Esophagus muscularis mucosa (tissue), 4 donors: ENCODE measurements at regions of chr10 and their contacts with region 1.

Region 1: GRCh38 chr10:14604181-14605142 is 170.2 kb downstream of the FAM107B start:
- DNase-seq: peak; percentile 95
- H3K4me3 ChIP-seq: peak overlapping the region; percentile 63 to 90 (median 64)
- H3K27ac ChIP-seq: peak overlapping the region; percentile 69 to 79 (median 74)
- H3K4me1 ChIP-seq: peaks cover 10 to 31% (median 19%) of the 10 kb centered on the region in 4 donors
- H3K27me3 ChIP-seq: no peaks in the 10 kb centered on the region
- CTCF ChIP-seq: no peak
- EP300 ChIP-seq: no peak
- POLR2A ChIP-seq: no peak

Region 2: GRCh38 chr10:14659626-14660196 is 55.2 kb after region 1 on chr10:
- intact Hi-C with region 1: loop called (anchors 10 kb)
- DNase-seq: no peak
- H3K4me3 ChIP-seq: no peak overlapping the region
- H3K27ac ChIP-seq: no peak overlapping the region
- H3K4me1 ChIP-seq: peaks cover 0 to 3% (median under 1%) of the 10 kb centered on the region in 4 donors
- H3K27me3 ChIP-seq: no peaks in the 10 kb centered on the region
- CTCF ChIP-seq: no peak
- EP300 ChIP-seq: no peak
- POLR2A ChIP-seq: no peak

Region 3: DNA sequence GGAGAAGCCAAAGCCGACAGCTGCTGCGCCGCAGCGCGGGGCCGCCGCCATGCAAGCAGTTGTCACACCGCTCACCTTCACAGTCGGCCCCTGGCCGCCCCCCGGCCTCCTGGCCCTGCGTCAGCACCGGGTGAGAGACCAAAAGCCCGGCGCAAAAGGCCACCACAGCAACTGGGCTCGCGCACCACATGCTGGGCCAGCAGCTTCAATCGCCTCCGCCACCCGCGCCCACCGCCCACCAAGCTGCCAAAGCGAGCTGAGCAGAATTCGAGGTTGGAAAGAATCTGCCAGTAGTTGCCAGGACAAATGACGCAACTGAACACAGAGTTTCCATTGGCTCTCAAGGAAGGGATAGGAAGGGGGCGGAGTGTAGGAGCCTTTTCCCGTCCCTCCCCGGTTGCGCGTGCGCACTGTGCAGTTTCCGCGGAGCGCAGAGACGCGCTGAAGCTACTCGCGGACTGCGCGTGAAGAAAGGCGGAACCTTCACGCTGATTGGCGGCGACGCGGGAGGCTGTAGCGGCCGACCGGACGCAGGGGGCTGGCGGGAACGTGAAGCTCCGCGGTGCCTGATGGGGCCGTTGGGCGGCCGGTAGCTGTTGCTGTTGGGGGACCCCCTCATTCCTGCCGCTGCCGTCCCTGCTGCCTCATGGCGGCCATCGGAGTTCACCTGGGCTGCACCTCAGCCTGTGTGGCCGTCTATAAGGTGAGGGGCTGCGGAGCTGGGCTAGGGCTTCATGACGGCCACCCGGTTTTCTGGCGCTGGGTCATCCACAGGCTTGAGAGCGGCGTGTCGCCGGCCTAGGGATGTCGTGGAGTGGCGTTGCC is 233.5 kb after region 1 on chr10 and contains the starts of genes CDNF, HSPA14 and MSANTD7:
- intact Hi-C with region 1: loop called (anchors 5 kb)
- DNase-seq: peak; percentile 99
- H3K4me3 ChIP-seq: peak within 1 kb of the TSS; percentile 71 to 97 (median 84)
- H3K27ac ChIP-seq: peak within 1 kb of the TSS; percentile 95 to 96 (median 96)
- H3K4me1 ChIP-seq: peaks cover 17 to 22% (median 19%) of the 10 kb centered on the region in 4 donors
- H3K27me3 ChIP-seq: no peaks in the 10 kb centered on the region
- CTCF ChIP-seq: peak in 1 of 3 experiments; percentile 9
- EP300 ChIP-seq: no peak
- POLR2A ChIP-seq: peak; percentile 66
- total RNA-seq, gene CDNF: 0.45 to 3.7 (median 0.67) TPM
- total RNA-seq, gene HSPA14: 6.8 to 9.8 (median 7.8) TPM
- total RNA-seq, gene MSANTD7: 5.4 to 11.1 (median 8.0) TPM